Psoas muscle (tissue), 8 donors: ENCODE measurements at regions of chr12 and their contacts with region 1.

Region 1: GRCh38 chr12:67364228-67364627 is 95.1 kb downstream of the CAND1 start:
- DNase-seq: no peak
- ATAC-seq: no peak
- H3K4me3 ChIP-seq: no peak overlapping the region
- H3K27ac ChIP-seq: no peak overlapping the region
- H3K4me1 ChIP-seq: no peaks in the 10 kb centered on the region
- H3K27me3 ChIP-seq: no peaks in the 10 kb centered on the region
- CTCF ChIP-seq: no peak

Region 2: DNA sequence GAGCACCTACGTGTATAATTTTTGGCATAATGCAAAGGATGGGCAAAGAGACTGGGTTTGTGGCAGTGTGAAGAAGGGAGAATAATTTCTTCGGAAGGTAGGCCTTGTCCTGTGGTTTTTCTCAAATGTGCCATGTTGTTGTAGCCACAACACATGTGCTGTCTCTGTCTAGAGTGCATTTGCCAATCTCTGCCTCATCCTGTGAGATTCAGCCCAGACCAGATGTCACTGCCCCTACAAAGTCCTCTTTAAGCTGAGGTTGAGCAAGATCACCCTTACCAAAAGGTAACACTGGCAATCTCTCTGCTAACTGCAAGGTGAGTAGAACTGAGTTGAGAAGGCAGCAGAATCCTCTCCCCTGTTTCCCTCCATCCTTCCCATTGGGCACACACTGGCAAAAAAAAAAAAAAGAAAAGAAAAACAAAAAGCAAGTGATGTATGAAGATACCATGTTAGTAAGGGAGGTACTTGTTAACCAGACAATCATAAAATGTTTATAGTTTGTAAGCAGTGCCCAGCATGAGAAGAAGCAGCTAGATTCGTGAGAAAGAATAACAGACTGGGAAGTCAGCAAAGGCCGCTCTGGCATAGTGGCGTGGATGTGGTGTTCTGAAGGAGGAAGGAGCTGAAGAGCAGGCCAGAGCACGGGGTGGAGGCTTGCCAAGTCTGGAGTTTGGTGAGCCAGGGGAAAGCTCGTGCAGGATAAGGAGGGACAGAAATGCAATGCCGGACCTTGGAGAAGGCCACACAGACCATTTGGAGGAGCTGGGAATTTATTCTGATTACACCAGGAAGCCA is 303.2 kb after region 1 on chr12:
- intact Hi-C with region 1: loop called in 1 of 2 experiments (anchors 5 kb)
- DNase-seq: peak; percentile 57 to 67
- ATAC-seq: peak in 3 of 4 donors; percentile 51 to 65 (median 60)
- H3K4me3 ChIP-seq: no peak overlapping the region
- H3K27ac ChIP-seq: peak overlapping the region; percentile 67
- H3K4me1 ChIP-seq: peaks cover 56% of the 10 kb centered on the region
- H3K27me3 ChIP-seq: no peaks in the 10 kb centered on the region
- CTCF ChIP-seq: no peak

Region 3: GRCh38 chr12:67804168-67804567 is 439.9 kb after region 1 on chr12:
- intact Hi-C with region 1: no loop called
- DNase-seq: no peak
- ATAC-seq: no peak
- H3K4me3 ChIP-seq: no peak overlapping the region
- H3K27ac ChIP-seq: no peak overlapping the region
- H3K4me1 ChIP-seq: peaks cover 11% of the 10 kb centered on the region
- H3K27me3 ChIP-seq: no peaks in the 10 kb centered on the region
- CTCF ChIP-seq: no peak

Region 4: GRCh38 chr12:68140556-68140955 is 776.3 kb after region 1 on chr12:
- intact Hi-C with region 1: no loop called
- DNase-seq: no peak
- ATAC-seq: no peak
- H3K4me3 ChIP-seq: no peak overlapping the region
- H3K27ac ChIP-seq: no peak overlapping the region
- H3K4me1 ChIP-seq: peaks cover 8% of the 10 kb centered on the region
- H3K27me3 ChIP-seq: no peaks in the 10 kb centered on the region
- CTCF ChIP-seq: no peak